Activated CD4-positive, alpha-beta memory T cell treated with anti-CD3 and anti-CD28 coated beads, Interleukin-2, amount 10 ng/mL, durations not matched to agents 7 days and 5 days (primary cell): ENCODE measurements at regions of chr9 and their contacts with region 1.

Region 1: GRCh38 chr9:22008736-22009562 is at the start of gene CDKN2B:
- DNase-seq: peak; percentile 79
- H3K4me3 Mint-ChIP-seq: peak within 1 kb of the TSS; percentile 82
- H3K27ac Mint-ChIP-seq: no peak within 1 kb of the TSS
- H3K4me1 Mint-ChIP-seq: peaks cover 33% of the 10 kb centered on the region
- H3K27me3 Mint-ChIP-seq: peaks cover 50% of the 10 kb centered on the region
- total RNA-seq, gene CDKN2B: 2.5 to 3.4 TPM

Region 2: GRCh38 chr9:21933865-21934264 is 75.1 kb before region 1 on chr9:
- CTCF ChIA-PET with region 1: no interaction called
- POLR2A ChIA-PET with region 1: no interaction called
- DNase-seq: no peak
- H3K4me3 Mint-ChIP-seq: no peak overlapping the region
- H3K27ac Mint-ChIP-seq: no peak overlapping the region
- H3K4me1 Mint-ChIP-seq: no peaks in the 10 kb centered on the region
- H3K27me3 Mint-ChIP-seq: no peaks in the 10 kb centered on the region

Region 3: DNA sequence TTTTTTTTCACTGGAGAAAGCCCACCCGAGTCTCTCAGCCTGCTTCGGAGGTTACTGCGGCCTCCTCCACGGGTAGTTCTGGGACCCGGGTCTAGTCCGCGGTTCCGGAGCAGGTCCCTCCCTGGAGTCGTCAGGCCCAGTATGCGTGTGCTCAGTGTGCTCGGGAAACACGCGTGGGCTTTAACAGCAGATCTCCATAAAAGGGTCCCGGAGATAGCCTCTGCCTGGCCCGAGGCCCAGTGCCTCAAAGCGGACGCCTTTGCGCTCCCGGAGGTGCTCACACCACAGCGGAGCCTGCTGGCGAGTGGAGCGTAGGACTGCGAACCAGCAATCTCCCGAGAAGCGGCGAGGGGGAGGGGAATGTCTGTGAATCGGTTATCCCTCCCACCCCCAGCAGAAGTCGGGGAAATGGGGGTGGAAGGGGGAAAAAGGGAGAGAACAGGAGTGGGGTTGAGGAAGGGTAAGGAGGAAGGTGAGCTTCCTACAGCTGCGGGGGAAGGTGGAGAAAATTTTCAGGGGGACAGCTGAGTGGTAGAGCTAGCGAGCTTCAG is 43.5 kb before region 1 on chr9:
- CTCF ChIA-PET with region 1: interaction called, 27 read pairs
- POLR2A ChIA-PET with region 1: interaction called, 7 read pairs
- DNase-seq: peak; percentile 69
- H3K4me3 Mint-ChIP-seq: peak overlapping the region; percentile 59
- H3K27ac Mint-ChIP-seq: peak overlapping the region; percentile 22
- H3K4me1 Mint-ChIP-seq: peaks cover 36% of the 10 kb centered on the region
- H3K27me3 Mint-ChIP-seq: peaks cover 91% of the 10 kb centered on the region

Region 4: GRCh38 chr9:21995177-21996086 is 13.5 kb before region 1 on chr9:
- CTCF ChIA-PET with region 1: interaction called, 72 read pairs
- POLR2A ChIA-PET with region 1: interaction called, 29 read pairs
- DNase-seq: peak; percentile 89
- H3K4me3 Mint-ChIP-seq: peak overlapping the region; percentile 96
- H3K27ac Mint-ChIP-seq: peak overlapping the region; percentile 98
- H3K4me1 Mint-ChIP-seq: peaks cover 34% of the 10 kb centered on the region
- H3K27me3 Mint-ChIP-seq: peaks cover 14% of the 10 kb centered on the region

Region 5: DNA sequence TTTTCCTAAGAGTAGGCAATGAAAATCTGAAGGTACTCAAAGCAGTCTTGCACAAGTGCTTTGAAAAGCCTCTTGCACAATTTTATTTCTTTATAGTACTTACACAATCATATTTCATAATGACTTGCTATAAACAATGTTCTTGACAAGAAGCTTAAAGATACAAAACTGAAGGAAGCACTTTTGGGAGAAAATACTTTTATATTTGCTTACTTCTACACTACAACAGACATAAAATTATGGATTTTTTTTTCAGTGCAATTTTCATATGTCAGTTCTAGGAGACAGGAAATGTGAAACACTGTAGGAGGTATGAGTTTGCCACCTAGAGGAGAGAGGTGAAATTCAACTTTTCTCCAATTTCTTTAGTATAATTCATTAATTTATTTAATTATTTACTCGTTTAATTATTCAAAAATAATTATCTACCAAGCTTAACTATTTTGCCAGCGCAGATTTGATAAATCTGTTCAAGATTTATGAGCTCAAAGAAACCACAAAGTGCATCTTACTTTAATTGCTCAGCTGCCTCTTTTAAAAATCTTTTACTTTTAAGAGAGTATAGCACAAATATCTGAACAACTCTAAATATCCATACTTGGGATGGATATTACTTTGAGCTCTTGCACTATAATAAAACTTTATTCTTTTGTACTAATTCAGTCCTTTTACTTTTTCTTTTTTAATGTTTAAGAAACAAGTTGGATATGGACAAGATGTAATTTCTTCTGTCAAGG is 29.2 kb after region 1 on chr9:
- CTCF ChIA-PET with region 1: interaction called, 43 read pairs
- POLR2A ChIA-PET with region 1: interaction called, 10 read pairs
- DNase-seq: no peak
- H3K4me3 Mint-ChIP-seq: no peak overlapping the region
- H3K27ac Mint-ChIP-seq: no peak overlapping the region
- H3K4me1 Mint-ChIP-seq: peaks cover 44% of the 10 kb centered on the region
- H3K27me3 Mint-ChIP-seq: peaks cover 21% of the 10 kb centered on the region

Region 6: DNA sequence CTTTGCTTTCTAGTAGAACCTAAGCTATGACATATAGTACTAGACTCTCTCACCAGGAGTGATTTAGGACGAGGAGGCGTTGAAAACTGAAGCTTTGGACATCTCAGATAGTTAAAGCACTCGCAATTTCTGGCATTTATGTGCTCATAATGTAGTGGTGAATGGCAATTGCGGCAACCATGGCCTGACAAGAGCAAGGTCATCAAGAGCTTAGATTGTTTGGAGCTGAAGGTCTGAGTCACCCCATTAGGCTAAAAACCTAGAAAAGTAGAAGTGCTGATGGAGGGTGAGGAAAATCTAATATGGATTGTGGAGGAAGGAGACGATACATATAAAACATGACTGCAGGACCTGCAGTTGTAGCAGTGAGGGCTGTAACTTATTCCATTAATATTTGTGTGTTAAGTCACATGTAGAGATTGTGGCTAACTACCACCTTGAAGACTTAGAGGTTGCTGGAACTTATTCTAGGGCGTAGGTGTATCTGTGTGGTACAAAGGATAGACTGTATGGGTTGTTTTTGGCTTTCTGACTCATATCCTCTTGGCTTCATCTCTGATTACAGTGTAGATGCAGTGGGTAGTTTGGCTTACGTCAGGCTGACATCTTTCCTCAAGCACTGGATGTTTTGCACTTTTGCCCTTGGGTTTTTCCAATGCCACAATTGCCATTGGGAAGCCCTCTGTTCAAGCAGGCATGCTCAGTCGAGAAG is 139.0 kb after region 1 on chr9:
- CTCF ChIA-PET with region 1: interaction called, 10 read pairs
- POLR2A ChIA-PET with region 1: no interaction called
- DNase-seq: peak; percentile 25
- H3K4me3 Mint-ChIP-seq: no peak overlapping the region
- H3K27ac Mint-ChIP-seq: no peak overlapping the region
- H3K4me1 Mint-ChIP-seq: peaks cover 24% of the 10 kb centered on the region
- H3K27me3 Mint-ChIP-seq: peaks cover 42% of the 10 kb centered on the region